ENCODE measurements at regions of chr9 and their contacts with region 1.

Region 1: GRCh38 chr9:123225374-123225813 is 43.0 kb downstream of the STRBP start:
- DNase-seq: no peak
- ATAC-seq: peak; percentile 92
- H3K4me3 Mint-ChIP-seq: peak overlapping the region; percentile 45
- H3K27ac Mint-ChIP-seq: peak overlapping the region; percentile 84
- H3K4me1 Mint-ChIP-seq: peaks cover 55% of the 10 kb centered on the region
- H3K27me3 Mint-ChIP-seq: no peaks in the 10 kb centered on the region
- CTCF ChIP-seq: no peak

Region 2: GRCh38 chr9:123081824-123082223 is 143.6 kb before region 1 on chr9:
- CTCF ChIA-PET with region 1: interaction called, 16 read pairs
- POLR2A ChIA-PET with region 1: no interaction called
- intact Hi-C with region 1: loop called (anchors 1 kb)
- DNase-seq: no peak
- ATAC-seq: peak; percentile 66
- H3K4me3 Mint-ChIP-seq: no peak overlapping the region
- H3K27ac Mint-ChIP-seq: no peak overlapping the region
- H3K4me1 Mint-ChIP-seq: peaks cover 19% of the 10 kb centered on the region
- H3K27me3 Mint-ChIP-seq: no peaks in the 10 kb centered on the region
- CTCF ChIP-seq: peak; percentile 44

Region 3: DNA sequence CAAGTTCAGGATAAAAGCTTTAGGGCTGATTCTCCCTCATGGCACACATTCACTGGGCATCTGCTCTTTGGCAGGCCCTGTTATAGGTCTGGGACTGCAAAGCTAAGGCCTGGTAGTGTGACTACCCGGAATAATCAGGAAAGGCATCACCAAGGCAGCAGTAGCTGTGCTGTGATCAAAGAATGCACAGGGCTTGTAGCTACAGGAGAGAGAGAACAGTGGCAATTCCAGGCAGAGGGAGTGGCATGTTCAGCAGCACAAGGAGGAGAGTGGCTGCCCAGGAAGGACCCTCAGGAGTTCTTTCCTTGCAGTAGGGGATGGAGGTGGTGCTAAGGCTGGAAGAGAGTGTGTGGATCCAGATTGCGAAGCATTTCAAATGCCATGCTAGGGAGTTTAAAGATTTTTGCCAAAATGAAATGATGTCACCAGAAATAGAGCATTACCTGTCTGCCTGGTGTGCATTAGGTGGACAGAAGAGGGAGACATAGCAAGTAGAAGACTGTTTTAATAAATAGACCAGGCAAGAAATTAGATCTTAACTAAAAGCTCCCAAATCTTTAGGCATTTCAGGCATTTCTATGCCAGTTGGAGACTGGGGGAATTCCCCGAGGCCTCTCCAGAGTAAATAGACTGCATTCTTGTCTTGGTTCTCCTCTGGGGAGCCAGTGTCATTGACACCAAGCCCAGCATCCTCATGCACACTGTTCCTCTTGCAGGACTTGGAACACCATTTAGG is 122.9 kb before region 1 on chr9:
- CTCF ChIA-PET with region 1: interaction called, 12 read pairs
- POLR2A ChIA-PET with region 1: interaction called, 4 read pairs
- intact Hi-C with region 1: loop called (anchors 2 kb)
- DNase-seq: no peak
- ATAC-seq: peak; percentile 34
- H3K4me3 Mint-ChIP-seq: no peak overlapping the region
- H3K27ac Mint-ChIP-seq: peak overlapping the region; percentile 71
- H3K4me1 Mint-ChIP-seq: peaks cover 12% of the 10 kb centered on the region
- H3K27me3 Mint-ChIP-seq: no peaks in the 10 kb centered on the region
- CTCF ChIP-seq: no peak

Region 4: GRCh38 chr9:123174887-123175518 is 50.4 kb before region 1 on chr9:
- CTCF ChIA-PET with region 1: interaction called, 8 read pairs
- POLR2A ChIA-PET with region 1: interaction called, 3 read pairs
- intact Hi-C with region 1: loop called (anchors 2 kb)
- DNase-seq: no peak
- ATAC-seq: peak; percentile 91
- H3K4me3 Mint-ChIP-seq: peak overlapping the region; percentile 63
- H3K27ac Mint-ChIP-seq: peak overlapping the region; percentile 97
- H3K4me1 Mint-ChIP-seq: peaks cover 82% of the 10 kb centered on the region
- H3K27me3 Mint-ChIP-seq: no peaks in the 10 kb centered on the region
- CTCF ChIP-seq: no peak

Region 5: GRCh38 chr9:123286324-123286723 is 60.9 kb after region 1 on chr9:
- CTCF ChIA-PET with region 1: no interaction called
- POLR2A ChIA-PET with region 1: interaction called, 12 read pairs
- intact Hi-C with region 1: no loop called
- DNase-seq: no peak
- ATAC-seq: no peak
- H3K4me3 Mint-ChIP-seq: no peak overlapping the region
- H3K27ac Mint-ChIP-seq: no peak overlapping the region
- H3K4me1 Mint-ChIP-seq: peaks cover 7% of the 10 kb centered on the region
- H3K27me3 Mint-ChIP-seq: no peaks in the 10 kb centered on the region
- CTCF ChIP-seq: no peak